ENCODE measurements at regions of chr10 and their contacts with region 1.

Region 1: GRCh38 chr10:13299437-13300287 is at the start of gene PHYH:
- DNase-seq: peak; percentile 95
- ATAC-seq: peak; percentile 95
- total RNA-seq, gene PHYH: 181 TPM

Region 2: DNA sequence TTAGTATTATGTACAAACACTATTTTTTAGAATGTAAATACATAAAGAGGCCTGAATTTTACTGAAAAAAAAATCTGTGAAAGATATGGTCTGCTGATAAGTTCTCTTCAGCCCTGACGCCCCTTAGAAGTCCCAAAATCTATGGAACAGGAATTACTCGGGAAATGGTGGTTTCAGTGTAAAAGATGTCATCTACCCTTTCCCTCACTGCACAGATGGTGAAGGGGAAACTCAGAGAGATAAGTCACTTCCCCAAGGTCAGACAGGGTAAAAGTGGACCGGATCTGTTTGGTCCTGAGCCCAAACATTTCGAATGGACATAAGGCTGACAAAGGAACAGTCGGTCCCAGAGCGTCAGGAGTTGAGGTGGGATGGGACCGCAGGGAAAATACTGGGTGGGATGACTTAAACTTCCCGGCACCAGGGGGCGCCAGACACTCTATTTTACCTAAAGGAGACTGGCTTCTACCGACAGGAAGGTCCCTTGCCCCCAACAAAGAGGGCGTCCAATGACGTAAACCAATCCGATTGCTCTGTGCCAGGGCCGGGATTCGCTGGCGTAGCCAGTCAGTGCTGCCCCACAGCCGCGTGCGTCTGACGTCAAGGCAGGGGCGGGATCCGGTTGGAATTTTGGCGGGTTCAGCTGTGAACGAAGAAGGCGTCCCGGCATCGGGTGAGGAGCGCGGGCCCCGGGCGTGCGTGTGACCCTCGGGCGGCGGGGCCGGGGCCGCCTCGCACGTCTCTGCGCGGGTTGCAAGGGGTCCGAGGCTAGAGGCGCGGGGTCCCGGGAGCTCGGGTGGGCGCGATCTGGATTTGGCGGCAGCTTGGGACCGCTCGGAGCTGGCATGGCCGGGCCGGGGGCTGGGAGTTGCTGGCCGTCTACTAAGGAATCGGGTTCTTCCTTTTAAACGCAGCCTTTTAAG is 138.5 kb before region 1 on chr10 and contains the start of gene MCM10:
- intact Hi-C with region 1: loop called (anchors 10 kb)
- DNase-seq: peak; percentile 97
- ATAC-seq: peak; percentile 100
- total RNA-seq, gene MCM10: 0.30 TPM

Region 3: DNA sequence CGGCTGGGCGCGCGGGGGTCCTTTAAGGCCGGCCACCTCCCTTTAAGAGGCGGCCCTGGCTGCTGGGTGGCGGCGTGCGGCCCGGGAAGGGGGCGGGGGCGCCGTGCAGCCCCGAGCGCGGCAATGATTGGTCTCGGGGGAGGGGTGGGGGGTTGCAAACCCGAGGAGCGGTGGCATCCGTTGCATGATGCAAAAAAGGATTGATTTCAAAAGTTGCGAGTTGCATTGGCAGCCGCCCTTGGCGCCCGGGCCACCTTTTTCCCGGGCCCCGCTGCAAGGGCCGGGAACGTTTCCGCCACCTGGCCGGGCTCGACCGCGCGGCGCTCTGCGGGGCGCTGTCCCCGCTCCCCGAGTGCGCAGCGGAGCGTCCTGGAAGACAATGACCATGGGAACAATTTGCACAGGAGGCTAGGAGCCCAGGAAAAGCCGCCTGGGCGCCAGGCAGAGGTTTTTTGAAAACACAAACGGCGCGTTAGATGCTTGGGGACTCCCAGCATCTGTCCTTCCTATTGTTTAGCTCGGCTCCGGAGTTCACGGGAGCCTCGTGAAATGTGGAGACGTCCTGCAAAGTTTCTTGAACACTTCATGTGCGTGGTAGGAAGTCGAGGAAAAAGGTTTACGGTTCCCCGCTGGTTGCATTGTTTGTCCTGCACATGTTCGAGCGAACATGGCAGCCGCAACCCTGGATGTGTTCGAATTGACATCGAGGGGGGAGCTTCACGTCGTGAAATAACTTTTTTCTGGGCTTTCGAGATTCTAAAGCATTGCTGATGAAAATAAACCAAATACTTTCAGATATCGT is 48.8 kb after region 1 on chr10 and contains the start of gene SEPHS1:
- intact Hi-C with region 1: loop called (anchors 5 kb)
- DNase-seq: peak; percentile 82
- ATAC-seq: peak; percentile 78
- total RNA-seq, gene SEPHS1: 27.8 TPM

Measured in Right ventricle myocardium superior (tissue), 1 donor.